Naive thymus-derived CD4-positive, alpha-beta T cell (primary cell): ENCODE measurements at regions of chr6 and their contacts with region 1.

Region 1: GRCh38 chr6:13711733-13712598 is at the start of gene RANBP9:
- DNase-seq: peak; percentile 86 to 92 (median 90)
- ATAC-seq: peak; percentile 90
- H3K4me3 ChIP-seq: peak within 1 kb of the TSS; percentile 85
- H3K4me3 Mint-ChIP-seq: peak within 1 kb of the TSS; percentile 91 to 100 (median 98)
- H3K27ac ChIP-seq: peak within 1 kb of the TSS; percentile 94
- H3K27ac Mint-ChIP-seq: peak within 1 kb of the TSS; percentile 93 to 99 (median 98)
- H3K4me1 ChIP-seq: peaks cover 12 to 15% of the 10 kb centered on the region in 2 donors
- H3K4me1 Mint-ChIP-seq: peaks cover 31 to 58% (median 45%) of the 10 kb centered on the region in 7 donors
- H3K27me3 ChIP-seq: no peaks in the 10 kb centered on the region
- H3K27me3 Mint-ChIP-seq: no peaks in the 10 kb centered on the region
- total RNA-seq, gene RANBP9: 45.4 to 56.9 (median 49.2) TPM

Region 2: DNA sequence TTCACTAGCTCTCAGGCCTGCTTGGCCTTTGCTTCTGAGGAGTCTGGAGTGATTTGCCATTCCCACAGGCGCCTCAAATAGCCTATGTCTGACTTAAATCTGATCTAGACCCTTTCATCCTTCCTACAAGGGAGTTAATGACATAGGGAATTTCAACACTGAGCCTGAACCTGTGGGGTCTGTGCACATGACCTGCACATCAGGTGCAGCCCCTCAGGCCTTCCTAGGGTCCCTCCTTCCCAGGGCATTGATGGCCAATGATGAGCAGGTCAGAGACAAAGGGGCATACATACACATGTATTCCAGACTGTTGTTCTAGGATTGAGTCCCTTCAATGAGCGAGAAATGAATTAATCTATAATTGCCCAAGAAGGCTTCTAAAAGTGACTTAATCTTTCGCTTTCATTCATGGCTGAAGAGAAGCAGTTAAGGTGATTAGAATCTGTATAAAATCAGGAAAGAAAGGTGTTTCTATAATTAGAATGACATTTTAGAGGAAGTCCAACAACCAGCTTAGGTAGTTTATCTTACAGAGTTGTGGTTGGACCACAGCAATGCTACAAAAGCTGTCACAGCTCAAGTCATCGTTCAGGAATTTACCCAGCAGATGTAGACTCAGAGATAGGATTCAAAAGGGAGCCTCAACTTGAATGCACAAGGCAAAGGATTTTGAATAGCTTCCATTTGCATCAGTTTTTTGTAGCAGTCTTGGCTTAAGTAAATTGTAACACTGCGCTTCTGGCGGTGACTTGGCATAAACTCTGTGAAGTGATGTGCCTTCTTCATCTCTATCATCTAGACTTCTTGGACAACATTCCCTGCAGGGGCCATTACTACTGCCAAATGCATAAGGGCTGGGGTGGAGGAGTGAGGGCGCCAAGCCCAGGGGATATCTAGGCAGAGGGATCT is 356.7 kb before region 1 on chr6:
- CTCF ChIA-PET with region 1: no interaction called
- POLR2A ChIA-PET with region 1: no interaction called
- intact Hi-C with region 1: loop called in 1 of 2 experiments (anchors 5 kb)
- DNase-seq: peak in 8 of 9 donors; percentile 10 to 42 (median 30)
- ATAC-seq: peak; percentile 75
- H3K4me3 ChIP-seq: peak overlapping the region; percentile 22
- H3K4me3 Mint-ChIP-seq: peak overlapping the region; percentile 78 to 91 (median 80)
- H3K27ac ChIP-seq: peak overlapping the region; percentile 46
- H3K27ac Mint-ChIP-seq: peak overlapping the region; percentile 71 to 98 (median 85)
- H3K4me1 ChIP-seq: peaks cover 27 to 32% of the 10 kb centered on the region in 2 donors
- H3K4me1 Mint-ChIP-seq: peaks cover 33 to 56% (median 46%) of the 10 kb centered on the region in 7 donors
- H3K27me3 ChIP-seq: no peaks in the 10 kb centered on the region
- H3K27me3 Mint-ChIP-seq: no peaks in the 10 kb centered on the region

Region 3: DNA sequence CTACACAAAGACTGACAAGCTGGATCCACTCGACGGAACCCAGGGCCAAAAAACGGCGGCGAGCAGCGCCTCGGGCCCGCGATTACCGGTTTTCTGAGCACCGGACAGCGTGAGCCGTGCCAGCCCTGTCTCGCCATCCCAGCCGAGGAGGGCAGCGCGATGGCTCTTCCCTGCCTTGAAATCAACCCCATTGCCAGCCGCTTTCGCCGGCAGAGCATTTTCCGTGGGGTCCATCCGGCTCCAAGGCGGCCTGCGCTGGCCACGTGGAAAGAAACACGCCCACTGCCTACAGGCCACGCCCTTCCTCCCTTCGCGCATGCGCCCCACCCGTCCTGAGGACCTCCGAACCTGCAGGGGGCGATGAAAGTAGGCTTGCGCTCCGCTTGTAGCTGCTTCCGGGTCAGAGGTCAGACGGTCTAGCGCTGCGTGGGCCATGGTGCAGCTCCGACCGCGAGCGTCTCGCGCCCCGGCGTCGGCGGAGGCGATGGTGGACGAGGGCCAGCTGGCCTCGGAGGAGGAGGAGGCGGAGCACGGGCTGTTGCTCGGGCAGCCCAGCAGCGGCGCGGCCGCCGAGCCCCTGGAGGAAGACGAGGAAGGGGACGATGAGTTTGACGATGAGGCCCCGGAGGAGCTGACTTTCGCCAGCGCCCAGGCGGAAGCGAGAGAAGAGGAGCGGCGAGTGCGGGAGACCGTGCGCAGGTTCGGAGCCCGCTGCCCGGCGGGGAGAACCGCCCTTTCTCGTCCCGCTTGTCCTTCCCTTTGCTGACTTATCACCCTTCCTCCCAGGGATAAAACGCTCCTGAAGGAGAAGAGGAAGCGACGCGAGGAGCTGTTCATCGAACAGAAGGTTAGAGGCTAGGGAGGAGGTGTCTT is 96.8 kb before region 1 on chr6 and contains the start of gene NOL7:
- CTCF ChIA-PET with region 1: interaction called, 12 read pairs
- POLR2A ChIA-PET with region 1: interaction called, 101 read pairs
- intact Hi-C with region 1: loop called (anchors 1 kb)
- DNase-seq: peak; percentile 96 to 99 (median 98)
- ATAC-seq: peak; percentile 98
- H3K4me3 ChIP-seq: peak within 1 kb of the TSS; percentile 85
- H3K4me3 Mint-ChIP-seq: peak within 1 kb of the TSS; percentile 82 to 98 (median 94)
- H3K27ac ChIP-seq: peak within 1 kb of the TSS; percentile 81
- H3K27ac Mint-ChIP-seq: peak within 1 kb of the TSS; percentile 85 to 97 (median 94)
- H3K4me1 ChIP-seq: peaks cover 8 to 26% of the 10 kb centered on the region in 2 donors
- H3K4me1 Mint-ChIP-seq: peaks cover 25 to 55% (median 47%) of the 10 kb centered on the region in 7 donors
- H3K27me3 ChIP-seq: no peaks in the 10 kb centered on the region
- H3K27me3 Mint-ChIP-seq: peaks cover 0 to 2% (median 0%) of the 10 kb centered on the region in 5 donors
- total RNA-seq, gene NOL7: 49.1 to 65.2 (median 62.1) TPM

Region 4: GRCh38 chr6:13668291-13668928 is 43.6 kb before region 1 on chr6:
- CTCF ChIA-PET with region 1: no interaction called
- POLR2A ChIA-PET with region 1: interaction called, 4 read pairs
- intact Hi-C with region 1: loop called in 1 of 2 experiments (anchors 2 kb)
- DNase-seq: no peak
- ATAC-seq: peak; percentile 47
- H3K4me3 ChIP-seq: no peak overlapping the region
- H3K4me3 Mint-ChIP-seq: peak overlapping the region in 7 of 10 donors; percentile 32 to 52 (median 40)
- H3K27ac ChIP-seq: no peak overlapping the region
- H3K27ac Mint-ChIP-seq: peak overlapping the region in 2 of 9 donors; percentile 20 to 75
- H3K4me1 ChIP-seq: peaks cover 23 to 44% of the 10 kb centered on the region in 2 donors
- H3K4me1 Mint-ChIP-seq: peaks cover 67 to 93% (median 90%) of the 10 kb centered on the region in 7 donors
- H3K27me3 ChIP-seq: no peaks in the 10 kb centered on the region
- H3K27me3 Mint-ChIP-seq: no peaks in the 10 kb centered on the region

Region 5: GRCh38 chr6:13696226-13696625 is 15.7 kb before region 1 on chr6:
- CTCF ChIA-PET with region 1: interaction called, 3 read pairs
- POLR2A ChIA-PET with region 1: interaction called, 39 read pairs
- intact Hi-C with region 1: loop called (anchors 1 to 2 kb)
- DNase-seq: no peak
- ATAC-seq: no peak
- H3K4me3 ChIP-seq: no peak overlapping the region
- H3K4me3 Mint-ChIP-seq: peak overlapping the region in 4 of 10 donors; percentile 28 to 66 (median 39)
- H3K27ac ChIP-seq: peak overlapping the region; percentile 60
- H3K27ac Mint-ChIP-seq: peak overlapping the region in 7 of 9 donors; percentile 56 to 92 (median 83)
- H3K4me1 ChIP-seq: peaks cover 31 to 42% of the 10 kb centered on the region in 2 donors
- H3K4me1 Mint-ChIP-seq: peaks cover 42 to 82% (median 73%) of the 10 kb centered on the region in 7 donors
- H3K27me3 ChIP-seq: no peaks in the 10 kb centered on the region
- H3K27me3 Mint-ChIP-seq: no peaks in the 10 kb centered on the region

Region 6: DNA sequence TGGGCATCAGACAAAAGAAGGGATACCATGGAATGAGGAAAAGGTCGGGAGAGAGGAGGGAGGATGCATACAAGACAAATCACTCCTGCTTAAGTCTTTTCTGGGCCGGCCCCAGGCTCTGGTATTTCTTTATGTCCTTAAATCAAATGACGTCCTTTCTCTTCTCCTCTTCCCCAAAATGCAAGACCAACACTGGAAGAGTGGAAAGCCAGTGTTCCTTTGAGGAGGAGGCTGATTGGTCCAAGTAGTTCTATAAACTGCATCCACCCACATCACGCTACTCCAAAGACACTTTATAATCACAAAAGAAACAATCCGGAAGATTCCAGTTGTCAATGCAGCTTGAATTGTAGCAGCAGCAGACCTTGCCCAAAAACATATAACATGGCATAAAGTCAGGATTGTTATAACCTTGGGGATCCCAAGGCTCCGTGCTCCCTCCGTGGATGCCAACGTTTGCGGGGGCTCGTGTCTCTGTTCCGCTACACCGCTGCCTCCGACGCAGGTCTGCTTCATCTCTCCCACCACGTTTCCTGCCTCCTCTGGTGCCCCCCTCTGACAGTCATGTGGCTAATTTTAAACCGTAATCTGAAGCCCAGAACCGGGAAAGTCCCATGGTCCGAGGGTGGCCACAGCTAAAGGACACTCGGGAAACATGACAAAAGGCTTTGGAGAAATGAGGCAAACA is 55.3 kb after region 1 on chr6:
- CTCF ChIA-PET with region 1: interaction called, 3 read pairs
- POLR2A ChIA-PET with region 1: no interaction called
- intact Hi-C with region 1: loop called (anchors 1 kb)
- DNase-seq: peak in 8 of 9 donors; percentile 12 to 48 (median 30)
- ATAC-seq: peak; percentile 66
- H3K4me3 ChIP-seq: peak overlapping the region; percentile 51
- H3K4me3 Mint-ChIP-seq: peak overlapping the region; percentile 53 to 86 (median 76)
- H3K27ac ChIP-seq: no peak overlapping the region
- H3K27ac Mint-ChIP-seq: peak overlapping the region in 7 of 9 donors; percentile 6 to 92 (median 59)
- H3K4me1 ChIP-seq: peaks cover 8 to 13% of the 10 kb centered on the region in 2 donors
- H3K4me1 Mint-ChIP-seq: peaks cover 10 to 49% (median 30%) of the 10 kb centered on the region in 7 donors
- H3K27me3 ChIP-seq: no peaks in the 10 kb centered on the region
- H3K27me3 Mint-ChIP-seq: peaks cover 0 to 6% (median 0%) of the 10 kb centered on the region in 5 donors

Region 7: DNA sequence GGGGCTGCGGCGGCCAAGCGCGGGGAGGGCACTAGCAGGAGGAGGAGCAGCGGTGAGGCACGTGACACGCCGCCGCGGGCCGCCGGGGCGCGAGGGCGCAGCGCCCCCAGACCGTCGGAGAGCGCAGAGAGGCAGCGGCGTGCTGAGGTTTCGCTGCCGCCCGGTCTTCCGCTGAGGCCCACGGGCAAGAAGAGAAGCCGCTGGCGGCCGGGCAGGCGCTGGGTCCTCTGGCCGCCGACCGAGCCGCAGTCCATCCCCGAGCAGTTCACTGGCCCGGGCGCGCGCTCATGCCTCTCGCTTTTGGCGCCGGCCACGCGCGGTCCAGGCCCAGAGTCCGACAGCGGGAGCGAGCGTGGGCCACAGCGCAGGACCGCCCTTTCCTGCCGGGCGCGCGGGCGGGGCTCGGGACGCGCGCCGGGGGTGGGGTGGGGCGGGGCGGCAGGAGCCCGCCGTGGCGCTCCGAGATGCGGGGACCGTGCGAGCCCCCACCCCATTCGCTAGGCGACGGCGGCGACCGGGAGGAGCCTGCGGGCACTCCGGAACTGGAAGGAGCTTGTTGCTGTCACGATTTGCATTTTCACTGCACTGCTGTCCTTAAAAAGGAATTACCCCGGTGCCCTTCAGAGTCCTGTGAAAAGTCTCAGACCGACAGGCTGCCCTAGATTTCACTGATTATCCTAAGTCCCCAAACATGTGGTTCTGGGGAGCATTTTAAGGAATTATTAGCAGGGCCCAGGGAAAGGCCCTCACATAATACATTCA is 102.4 kb after region 1 on chr6 and contains the start of gene MCUR1:
- CTCF ChIA-PET with region 1: no interaction called
- POLR2A ChIA-PET with region 1: no interaction called
- intact Hi-C with region 1: loop called (anchors 1 kb)
- DNase-seq: peak; percentile 69 to 87 (median 76)
- ATAC-seq: peak; percentile 91
- H3K4me3 ChIP-seq: peak within 1 kb of the TSS; percentile 71
- H3K4me3 Mint-ChIP-seq: peak within 1 kb of the TSS; percentile 87 to 92 (median 90)
- H3K27ac ChIP-seq: peak within 1 kb of the TSS; percentile 82
- H3K27ac Mint-ChIP-seq: peak within 1 kb of the TSS; percentile 60 to 93 (median 85)
- H3K4me1 ChIP-seq: peaks cover 0 to 13% of the 10 kb centered on the region in 2 donors
- H3K4me1 Mint-ChIP-seq: peaks cover 17 to 40% (median 38%) of the 10 kb centered on the region in 7 donors
- H3K27me3 ChIP-seq: no peaks in the 10 kb centered on the region
- H3K27me3 Mint-ChIP-seq: peaks cover 0 to 25% (median 0%) of the 10 kb centered on the region in 5 donors
- total RNA-seq, gene MCUR1: 5.7 to 20.6 (median 10.0) TPM